Heart left ventricle (tissue), 16 donors: ENCODE measurements at regions of chr16 and their contacts with region 1.

Region 1: DNA sequence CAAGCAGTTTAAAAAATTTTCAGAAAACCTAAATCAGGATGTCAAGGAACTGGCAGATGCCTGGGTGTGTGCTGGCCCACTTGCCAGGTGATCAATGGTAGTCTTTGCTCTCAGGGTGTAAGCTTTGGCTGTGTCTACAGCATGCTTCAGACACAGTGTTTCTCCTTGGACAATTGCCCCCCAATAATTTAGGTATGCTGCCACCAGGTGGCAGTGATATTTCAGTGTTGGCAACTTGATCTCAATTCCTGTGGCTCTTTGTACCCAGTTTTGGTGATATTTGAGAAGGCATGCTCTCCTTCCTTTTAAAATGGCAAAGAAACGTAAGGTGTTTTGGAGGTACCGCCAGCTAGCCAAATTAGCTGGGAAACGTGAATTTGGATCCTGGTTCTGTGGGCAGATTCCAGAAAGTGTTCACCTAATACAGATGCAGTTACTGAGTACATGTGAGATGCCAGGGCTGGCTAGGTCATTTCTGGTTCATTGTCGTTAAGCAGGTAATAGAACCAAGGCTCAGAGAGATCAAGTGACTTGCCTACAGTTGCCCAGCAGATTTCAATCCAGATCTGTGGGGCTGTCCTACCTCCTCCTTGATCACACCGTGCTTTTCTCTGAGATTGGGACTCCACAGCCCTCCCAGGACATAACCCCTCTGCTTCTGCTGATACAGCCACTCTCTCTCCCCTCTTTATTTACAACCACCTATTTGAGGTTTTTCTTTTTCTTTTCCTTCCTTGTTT is 155.6 kb upstream of the PLCG2 start:
- DNase-seq: peak in 1 of 5 donors; percentile 29
- ATAC-seq: no peak
- H3K4me3 ChIP-seq: no peak overlapping the region
- H3K27ac ChIP-seq: no peak overlapping the region
- H3K4me1 ChIP-seq: peaks cover 0 to 18% (median 13%) of the 10 kb centered on the region in 12 donors
- H3K27me3 ChIP-seq: no peaks in the 10 kb centered on the region
- CTCF ChIP-seq: peak; percentile 39 to 67 (median 55)
- POLR2A ChIP-seq: no peak

Region 2: DNA sequence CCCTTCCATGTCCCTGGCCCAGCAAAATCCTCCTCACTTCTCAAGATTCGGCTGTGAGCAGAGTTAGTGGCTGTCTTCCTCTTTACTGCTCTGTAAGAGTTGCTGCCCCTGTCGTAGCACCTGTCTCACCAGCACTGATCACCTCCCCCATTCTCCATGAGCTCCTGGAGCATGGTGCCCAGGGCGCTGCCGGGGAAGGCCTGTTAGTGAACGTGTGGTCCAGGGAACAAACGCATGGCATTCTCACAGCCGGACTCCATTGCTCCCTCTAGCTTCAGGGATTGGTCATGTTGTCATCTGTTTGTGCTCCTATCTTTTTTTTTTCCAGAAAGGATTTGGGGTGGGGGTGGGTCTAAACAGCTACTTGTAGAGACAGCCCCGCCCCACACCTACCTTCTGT is 37.7 kb before region 1 on chr16:
- intact Hi-C with region 1: no loop called
- DNase-seq: peak in 2 of 5 donors; percentile 1 to 29
- ATAC-seq: no peak
- H3K4me3 ChIP-seq: no peak overlapping the region
- H3K27ac ChIP-seq: no peak overlapping the region
- H3K4me1 ChIP-seq: peaks cover 0 to 15% (median 1%) of the 10 kb centered on the region in 12 donors
- H3K27me3 ChIP-seq: no peaks in the 10 kb centered on the region
- CTCF ChIP-seq: peak in 2 of 12 donors; percentile 19 to 20
- POLR2A ChIP-seq: no peak

Region 3: GRCh38 chr16:81696961-81697615 is 73.6 kb after region 1 on chr16:
- intact Hi-C with region 1: loop called in 2 of 10 experiments (anchors 5 to 10 kb)
- DNase-seq: peak in 3 of 5 donors; percentile 42 to 73 (median 52)
- ATAC-seq: peak in 2 of 4 donors; percentile 49
- H3K4me3 ChIP-seq: no peak overlapping the region
- H3K27ac ChIP-seq: peak overlapping the region in 3 of 12 donors; percentile 27 to 46 (median 40)
- H3K4me1 ChIP-seq: peaks cover 0 to 36% (median 19%) of the 10 kb centered on the region in 12 donors
- H3K27me3 ChIP-seq: no peaks in the 10 kb centered on the region
- CTCF ChIP-seq: peak; percentile 32 to 71 (median 58)
- POLR2A ChIP-seq: no peak

Region 4: GRCh38 chr16:82111944-82112343 is 488.4 kb after region 1 on chr16:
- intact Hi-C with region 1: no loop called
- DNase-seq: no peak
- ATAC-seq: no peak
- H3K4me3 ChIP-seq: no peak overlapping the region
- H3K27ac ChIP-seq: no peak overlapping the region
- H3K4me1 ChIP-seq: no peaks in the 10 kb centered on the region
- H3K27me3 ChIP-seq: peaks cover 0 to 14% (median 0%) of the 10 kb centered on the region in 9 donors
- CTCF ChIP-seq: no peak
- POLR2A ChIP-seq: no peak